ENCODE measurements at regions of chr7 and their contacts with region 1.

Region 1: GRCh38 chr7:73858807-73859206 is 2.2 kb upstream of the TMEM270 start:
- DNase-seq: no peak
- H3K4me3 ChIP-seq: no peak overlapping the region
- H3K4me3 Mint-ChIP-seq: no peak overlapping the region
- H3K27ac ChIP-seq: no peak overlapping the region
- H3K27ac Mint-ChIP-seq: no peak overlapping the region
- H3K4me1 ChIP-seq: no peaks in the 10 kb centered on the region
- H3K4me1 Mint-ChIP-seq: peaks cover 2 to 8% (median 8%) of the 10 kb centered on the region in 3 donors
- H3K27me3 ChIP-seq: peaks cover 7% of the 10 kb centered on the region
- H3K27me3 Mint-ChIP-seq: peaks cover 6 to 15% of the 10 kb centered on the region in 2 donors

Region 2: DNA sequence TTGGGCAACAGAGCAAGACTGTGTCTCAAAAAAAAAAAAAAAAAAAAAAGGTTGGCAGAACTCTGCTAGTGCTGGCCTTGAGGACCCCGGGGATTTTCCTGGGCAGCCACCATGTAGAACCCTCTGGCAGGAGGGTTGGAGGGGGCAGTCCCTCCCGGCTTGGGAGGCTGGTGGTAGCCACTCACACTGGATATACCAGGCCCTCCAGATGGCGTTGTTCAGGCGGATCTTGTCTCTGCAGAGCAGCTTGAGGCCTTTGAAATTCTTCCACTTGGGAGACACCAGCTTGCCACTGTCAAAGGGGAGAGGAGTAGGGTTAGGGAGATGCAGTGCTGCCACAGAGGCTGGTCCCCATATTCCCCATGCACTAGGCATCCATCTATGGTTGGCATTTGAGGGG is 242.9 kb before region 1 on chr7:
- CTCF ChIA-PET with region 1: no interaction called
- POLR2A ChIA-PET with region 1: interaction called, 11 read pairs
- DNase-seq: no peak
- H3K4me3 ChIP-seq: no peak overlapping the region
- H3K4me3 Mint-ChIP-seq: no peak overlapping the region
- H3K27ac ChIP-seq: no peak overlapping the region
- H3K27ac Mint-ChIP-seq: no peak overlapping the region
- H3K4me1 ChIP-seq: no peaks in the 10 kb centered on the region
- H3K4me1 Mint-ChIP-seq: no peaks in the 10 kb centered on the region
- H3K27me3 ChIP-seq: peaks cover 5% of the 10 kb centered on the region
- H3K27me3 Mint-ChIP-seq: peaks cover 3 to 30% of the 10 kb centered on the region in 2 donors

Region 3: GRCh38 chr7:73811760-73812168 is 47.0 kb before region 1 on chr7:
- CTCF ChIA-PET with region 1: interaction called, 18 read pairs
- POLR2A ChIA-PET with region 1: interaction called, 3 read pairs
- DNase-seq: peak; percentile 10 to 67 (median 24)
- H3K4me3 ChIP-seq: no peak overlapping the region
- H3K4me3 Mint-ChIP-seq: no peak overlapping the region
- H3K27ac ChIP-seq: no peak overlapping the region
- H3K27ac Mint-ChIP-seq: no peak overlapping the region
- H3K4me1 ChIP-seq: no peaks in the 10 kb centered on the region
- H3K4me1 Mint-ChIP-seq: no peaks in the 10 kb centered on the region
- H3K27me3 ChIP-seq: no peaks in the 10 kb centered on the region
- H3K27me3 Mint-ChIP-seq: peaks cover 10 to 28% of the 10 kb centered on the region in 2 donors

Measured in CD8-positive, alpha-beta memory T cell (primary cell).